ENCODE measurements at regions of chr2 and their contacts with region 1.

Region 1: GRCh38 chr2:70199326-70199864 is 8.6 kb upstream of the C2orf42 start:
- DNase-seq: no peak
- H3K4me3 ChIP-seq: no peak overlapping the region
- H3K27me3 ChIP-seq: no peaks in the 10 kb centered on the region
- CTCF ChIP-seq: no peak

Region 2: DNA sequence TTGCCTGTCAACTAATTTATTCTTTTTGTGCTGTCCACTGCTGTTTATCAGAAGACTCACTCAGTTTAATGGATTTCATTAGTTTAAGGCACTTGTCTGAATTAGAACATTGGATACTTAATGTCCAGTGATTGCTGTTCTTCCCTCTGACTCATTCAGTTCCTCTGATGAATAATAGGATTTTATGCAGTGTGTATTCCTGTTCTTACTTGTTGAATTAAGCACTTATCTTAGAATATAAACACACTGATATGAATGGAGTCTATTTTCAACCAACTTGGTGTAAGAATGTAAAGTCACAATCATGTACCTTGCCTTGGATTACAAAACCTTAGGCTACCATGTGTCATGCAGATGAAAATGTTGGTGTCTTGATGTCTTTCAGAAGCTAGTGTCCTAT is 1643.0 kb before region 1 on chr2:
- CTCF ChIA-PET with region 1: no interaction called
- POLR2A ChIA-PET with region 1: no interaction called
- DNase-seq: no peak
- H3K4me3 ChIP-seq: no peak overlapping the region
- H3K27me3 ChIP-seq: no peaks in the 10 kb centered on the region
- CTCF ChIP-seq: no peak

Region 3: GRCh38 chr2:69863298-69863697 is 336.1 kb before region 1 on chr2:
- CTCF ChIA-PET with region 1: no interaction called
- POLR2A ChIA-PET with region 1: interaction called, 25 read pairs
- DNase-seq: no peak
- H3K4me3 ChIP-seq: no peak overlapping the region
- H3K27me3 ChIP-seq: no peaks in the 10 kb centered on the region
- CTCF ChIP-seq: no peak

Region 4: DNA sequence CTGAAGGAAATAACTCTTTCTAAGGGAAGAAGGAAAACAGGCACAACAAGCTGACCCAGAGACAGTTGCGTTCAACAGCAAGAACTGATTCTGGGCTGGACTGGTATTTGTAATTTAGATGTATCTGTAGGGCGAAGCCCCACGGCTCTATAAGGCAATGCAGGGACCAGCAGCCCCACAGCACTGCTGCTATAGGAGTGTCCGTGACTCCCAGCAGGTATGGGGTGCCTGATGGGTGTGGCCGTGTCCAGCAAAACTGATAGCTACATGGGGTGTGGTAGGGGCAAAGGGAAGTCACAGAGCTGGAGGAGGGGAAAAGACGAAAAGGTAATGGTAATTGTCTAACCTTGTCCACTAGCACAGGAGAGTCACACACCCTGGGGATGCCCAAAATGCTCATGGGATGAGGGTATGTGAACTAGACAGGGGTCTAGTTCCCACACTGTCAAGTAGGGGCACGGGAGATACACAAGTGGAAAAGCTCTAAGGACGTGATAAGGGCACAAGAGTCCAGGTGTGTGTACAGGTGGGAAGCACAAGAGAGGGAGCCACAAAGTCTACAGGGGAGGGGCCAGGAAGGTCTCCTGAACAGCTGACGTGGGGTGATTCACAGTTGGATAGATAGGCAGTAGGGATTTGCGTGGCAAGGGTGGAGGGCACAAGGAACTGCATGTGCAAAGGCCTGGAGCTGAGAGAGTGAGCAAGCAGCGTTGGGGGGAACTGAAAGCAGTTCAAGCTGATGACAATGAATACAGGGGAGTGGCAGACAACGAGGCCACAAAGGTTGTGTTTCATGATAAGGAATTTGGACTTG is 189.4 kb before region 1 on chr2:
- CTCF ChIA-PET with region 1: no interaction called
- POLR2A ChIA-PET with region 1: no interaction called
- DNase-seq: no peak
- H3K4me3 ChIP-seq: no peak overlapping the region
- H3K27me3 ChIP-seq: no peaks in the 10 kb centered on the region
- CTCF ChIP-seq: no peak

Region 5: DNA sequence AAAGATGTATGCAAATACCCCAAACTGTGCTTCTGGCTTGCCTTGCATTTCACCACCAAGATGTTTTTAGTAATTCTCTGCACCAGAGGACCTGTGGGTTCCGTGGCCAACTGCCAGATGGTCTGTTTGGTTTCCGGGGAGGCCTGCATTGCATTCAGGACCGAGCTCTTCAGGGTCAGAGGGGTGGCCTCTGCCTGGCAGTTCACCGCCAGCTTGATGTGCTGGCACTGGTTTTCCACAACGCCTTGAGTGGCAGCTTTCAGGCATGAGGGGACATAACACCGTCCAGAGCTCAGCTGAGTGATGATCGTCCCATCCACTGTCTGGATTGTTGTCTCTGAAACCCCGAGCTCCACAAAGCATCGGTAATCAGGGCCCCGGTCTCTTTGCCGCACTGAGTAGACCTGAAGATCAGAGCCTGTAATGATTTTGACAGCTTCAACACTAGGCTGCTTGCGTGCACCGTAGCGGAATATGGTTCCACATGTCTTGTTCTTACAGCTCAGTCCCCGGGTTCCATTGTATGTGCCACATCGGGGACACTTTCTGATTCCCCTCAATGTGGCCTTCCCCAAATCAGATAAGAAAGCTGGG is 17.9 kb before region 1 on chr2:
- CTCF ChIA-PET with region 1: no interaction called
- POLR2A ChIA-PET with region 1: no interaction called
- DNase-seq: no peak
- H3K4me3 ChIP-seq: no peak overlapping the region
- H3K27me3 ChIP-seq: no peaks in the 10 kb centered on the region
- CTCF ChIP-seq: no peak